Sciatic nerve (tissue), 2 donors: ENCODE measurements at regions of chr2 and their contacts with region 1.

Region 1: GRCh38 chr2:220904015-220904414 is 668.1 kb downstream of the EPHA4 start:
- DNase-seq: no peak
- ATAC-seq: no peak

Region 2: DNA sequence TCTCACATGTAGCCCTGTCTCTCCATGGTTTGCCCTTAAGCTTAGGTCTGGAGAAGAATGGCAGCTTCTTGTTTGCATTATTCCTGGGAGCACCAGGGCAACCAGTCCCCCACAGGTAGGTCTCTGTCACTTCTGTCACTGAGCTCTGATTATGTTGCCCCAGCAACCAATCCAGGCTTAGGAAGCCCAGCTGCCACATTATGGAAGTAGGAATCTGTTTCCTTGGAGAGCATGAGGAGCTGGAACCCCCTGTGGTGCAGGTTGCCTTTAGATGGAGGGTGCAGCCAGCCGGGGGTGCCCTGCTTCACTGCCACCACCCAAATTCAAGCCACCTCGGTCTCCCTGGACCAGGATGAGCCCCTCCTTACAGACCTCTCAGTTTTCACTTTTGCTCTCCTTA is 1576.3 kb before region 1 on chr2:
- intact Hi-C with region 1: no loop called
- DNase-seq: no peak
- ATAC-seq: no peak

Region 3: DNA sequence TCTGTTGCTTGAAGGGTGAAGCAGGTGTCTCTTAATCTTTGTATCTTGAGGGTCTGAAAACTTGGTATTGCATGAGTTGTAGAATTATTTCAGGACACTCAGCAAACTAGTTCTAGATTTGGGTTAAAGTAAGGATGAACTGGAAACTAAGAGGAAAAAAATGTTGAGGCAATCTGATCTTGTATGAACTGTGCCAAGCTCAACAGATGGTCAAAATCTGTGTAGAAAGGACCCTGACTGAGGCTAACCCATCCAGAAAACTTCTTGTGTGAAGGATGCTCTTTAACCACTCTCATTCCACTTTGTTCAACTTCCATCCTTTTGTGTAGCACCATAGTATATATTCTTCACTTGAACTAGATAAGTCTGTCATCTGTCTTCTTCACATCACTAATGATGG is 414.9 kb before region 1 on chr2:
- intact Hi-C with region 1: no loop called
- DNase-seq: no peak
- ATAC-seq: no peak

Region 4: GRCh38 chr2:221189431-221190067 is 285.5 kb after region 1 on chr2:
- intact Hi-C with region 1: no loop called
- DNase-seq: no peak
- ATAC-seq: no peak

Region 5: DNA sequence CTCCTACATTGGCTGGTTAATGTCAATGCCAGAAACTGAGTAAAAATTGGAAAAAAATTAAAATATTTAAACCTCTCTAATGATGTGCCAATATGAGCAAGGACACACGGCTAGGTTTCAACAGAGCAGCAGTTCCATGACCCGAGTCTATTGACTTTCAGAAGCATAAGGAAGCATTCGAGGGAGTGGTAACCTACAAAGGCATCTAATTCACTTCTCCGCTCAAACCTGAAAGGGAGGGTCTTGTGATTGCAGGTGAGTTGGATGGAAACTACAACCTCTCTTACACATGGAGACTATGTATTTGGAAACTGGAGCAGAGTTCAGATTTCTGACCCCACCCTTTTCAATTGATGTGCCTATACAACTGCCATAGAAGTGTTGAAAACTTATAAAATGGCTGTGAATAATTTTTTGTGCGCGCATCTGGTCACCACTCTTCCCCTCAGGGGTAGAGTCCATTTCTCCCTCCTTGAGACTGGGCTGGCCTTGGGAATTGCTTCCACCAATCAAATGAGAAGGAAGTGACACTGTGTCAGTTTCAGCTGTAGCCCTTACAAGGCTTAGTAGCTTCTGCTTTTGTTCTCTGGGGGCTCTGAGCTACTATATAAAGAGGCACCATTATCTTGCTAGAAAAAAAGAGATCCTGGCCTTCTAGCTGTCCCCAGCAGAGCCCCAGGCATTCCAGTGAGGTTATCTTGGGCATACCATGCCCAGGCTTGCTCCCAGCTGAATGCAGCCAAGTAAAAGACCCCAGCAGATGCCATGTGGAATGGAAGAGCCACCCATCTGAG is 390.1 kb after region 1 on chr2:
- intact Hi-C with region 1: loop called (anchors 10 kb)
- DNase-seq: no peak
- ATAC-seq: no peak